RWPE1 (cell line): ENCODE measurements at regions of chr16 and their contacts with region 1.

Region 1: GRCh38 chr16:12067714-12068401 is 91.3 kb downstream of the SNX29 start:
- DNase-seq: peak; percentile 72
- H3K27ac ChIP-seq: peak overlapping the region; percentile 11; the same call in 1 of the 2 replicates
- CTCF ChIP-seq: peak; percentile 92

Region 2: DNA sequence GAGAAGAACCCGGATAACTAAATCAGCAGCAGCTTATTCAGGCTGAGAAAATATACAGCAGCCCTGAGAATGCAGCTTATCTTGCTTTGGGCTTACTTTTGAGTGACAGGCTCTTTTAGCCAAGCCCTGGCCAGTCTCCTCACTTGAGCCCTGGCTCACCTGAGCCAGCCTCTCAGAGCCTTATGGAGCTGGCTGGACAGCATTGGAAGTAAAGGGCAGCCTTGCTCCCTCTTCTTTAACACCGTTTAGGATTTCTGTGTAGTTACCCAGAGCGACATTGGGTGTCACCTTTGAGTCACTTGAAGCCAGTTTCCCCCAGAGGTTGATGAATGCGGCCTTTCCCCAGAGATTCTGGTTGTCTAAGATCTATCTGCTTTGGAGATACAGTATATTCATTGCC is 118.3 kb before region 1 on chr16:
- CTCF ChIA-PET with region 1: interaction called, 14 read pairs
- POLR2A ChIA-PET with region 1: no interaction called
- DNase-seq: peak; percentile 31
- H3K27ac ChIP-seq: no peak overlapping the region
- CTCF ChIP-seq: peak; percentile 46; the same call in 1 of the 2 replicates

Region 3: DNA sequence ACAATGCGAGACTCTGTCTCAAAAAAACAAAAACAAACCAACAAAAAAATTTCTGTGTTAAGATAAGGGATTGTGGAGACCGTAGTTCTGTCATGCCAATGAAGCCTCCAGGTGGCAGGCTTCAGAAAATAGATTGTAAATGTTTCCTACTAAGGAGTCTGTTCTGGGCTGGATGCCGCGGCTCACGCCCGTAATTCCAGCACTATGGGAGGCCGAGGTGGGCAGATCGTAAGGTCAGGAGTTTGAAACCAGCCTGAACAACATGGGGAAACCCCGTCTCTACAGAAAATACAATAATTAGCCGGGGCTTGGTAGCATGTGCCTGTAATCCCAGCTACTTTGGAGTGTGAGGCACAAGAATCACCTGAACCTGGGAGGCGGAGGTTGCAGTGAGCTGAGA is 95.7 kb before region 1 on chr16:
- CTCF ChIA-PET with region 1: interaction called, 14 read pairs
- POLR2A ChIA-PET with region 1: no interaction called
- DNase-seq: no peak
- H3K27ac ChIP-seq: peak overlapping the region; percentile 14; the same call in 1 of the 2 replicates
- CTCF ChIP-seq: no peak

Region 4: GRCh38 chr16:11977376-11978041 is 90.3 kb before region 1 on chr16:
- CTCF ChIA-PET with region 1: interaction called, 14 read pairs
- POLR2A ChIA-PET with region 1: no interaction called
- DNase-seq: peak; percentile 55
- H3K27ac ChIP-seq: peak overlapping the region; percentile 79
- CTCF ChIP-seq: no peak